ENCODE measurements at regions of chr3 and their contacts with region 1.

Region 1: GRCh38 chr3:50436114-50436674 is 67.2 kb downstream of the CACNA2D2 start:
- DNase-seq: peak; percentile 62 to 89 (median 80)
- ATAC-seq: peak; percentile 98
- H3K4me3 ChIP-seq: no peak overlapping the region
- H3K4me3 Mint-ChIP-seq: no peak overlapping the region
- H3K27ac ChIP-seq: no peak overlapping the region
- H3K27ac Mint-ChIP-seq: no peak overlapping the region
- H3K4me1 ChIP-seq: peaks cover 7% of the 10 kb centered on the region
- H3K4me1 Mint-ChIP-seq: peaks cover 4% of the 10 kb centered on the region
- H3K27me3 ChIP-seq: no peaks in the 10 kb centered on the region
- H3K27me3 Mint-ChIP-seq: no peaks in the 10 kb centered on the region
- CTCF ChIP-seq: peak; percentile 87

Region 2: GRCh38 chr3:50450209-50450921 is 14.2 kb after region 1 on chr3:
- CTCF ChIA-PET with region 1: interaction called, 13 read pairs
- POLR2A ChIA-PET with region 1: no interaction called
- intact Hi-C with region 1: no loop called
- DNase-seq: peak; percentile 48 to 82 (median 75)
- ATAC-seq: peak; percentile 80
- H3K4me3 ChIP-seq: peak overlapping the region; percentile 43 to 54
- H3K4me3 Mint-ChIP-seq: peak overlapping the region; percentile 86
- H3K27ac ChIP-seq: peak overlapping the region; percentile 83 to 88
- H3K27ac Mint-ChIP-seq: peak overlapping the region; percentile 93
- H3K4me1 ChIP-seq: peaks cover 28% of the 10 kb centered on the region
- H3K4me1 Mint-ChIP-seq: peaks cover 32% of the 10 kb centered on the region
- H3K27me3 ChIP-seq: no peaks in the 10 kb centered on the region
- H3K27me3 Mint-ChIP-seq: no peaks in the 10 kb centered on the region
- CTCF ChIP-seq: no peak

Region 3: DNA sequence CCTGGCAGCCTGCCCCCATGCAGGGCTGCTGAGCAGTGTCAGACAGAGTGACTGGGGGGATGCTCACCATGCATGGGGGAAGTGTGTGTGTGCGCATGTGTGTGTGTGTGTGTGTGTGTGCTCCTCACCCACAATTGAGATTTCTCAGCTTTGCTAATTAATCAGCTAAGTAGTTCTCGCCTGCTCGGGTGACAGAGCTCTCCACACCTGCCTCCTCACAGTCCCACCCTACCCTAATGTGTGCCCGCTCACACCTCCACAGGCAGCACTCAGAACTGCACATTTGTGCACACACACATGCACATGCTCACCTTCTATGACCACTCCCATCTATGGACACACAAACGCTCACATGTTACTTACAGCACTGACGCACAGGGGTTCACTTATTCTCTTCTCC is 30.0 kb after region 1 on chr3:
- CTCF ChIA-PET with region 1: interaction called, 3 read pairs
- POLR2A ChIA-PET with region 1: no interaction called
- intact Hi-C with region 1: loop called in 1 of 2 experiments (anchors 2 kb)
- DNase-seq: peak in 2 of 9 experiments; percentile 52 to 60
- ATAC-seq: peak; percentile 74
- H3K4me3 ChIP-seq: no peak overlapping the region
- H3K4me3 Mint-ChIP-seq: no peak overlapping the region
- H3K27ac ChIP-seq: no peak overlapping the region
- H3K27ac Mint-ChIP-seq: no peak overlapping the region
- H3K4me1 ChIP-seq: no peaks in the 10 kb centered on the region
- H3K4me1 Mint-ChIP-seq: peaks cover 3% of the 10 kb centered on the region
- H3K27me3 ChIP-seq: no peaks in the 10 kb centered on the region
- H3K27me3 Mint-ChIP-seq: no peaks in the 10 kb centered on the region
- CTCF ChIP-seq: no peak

Region 4: DNA sequence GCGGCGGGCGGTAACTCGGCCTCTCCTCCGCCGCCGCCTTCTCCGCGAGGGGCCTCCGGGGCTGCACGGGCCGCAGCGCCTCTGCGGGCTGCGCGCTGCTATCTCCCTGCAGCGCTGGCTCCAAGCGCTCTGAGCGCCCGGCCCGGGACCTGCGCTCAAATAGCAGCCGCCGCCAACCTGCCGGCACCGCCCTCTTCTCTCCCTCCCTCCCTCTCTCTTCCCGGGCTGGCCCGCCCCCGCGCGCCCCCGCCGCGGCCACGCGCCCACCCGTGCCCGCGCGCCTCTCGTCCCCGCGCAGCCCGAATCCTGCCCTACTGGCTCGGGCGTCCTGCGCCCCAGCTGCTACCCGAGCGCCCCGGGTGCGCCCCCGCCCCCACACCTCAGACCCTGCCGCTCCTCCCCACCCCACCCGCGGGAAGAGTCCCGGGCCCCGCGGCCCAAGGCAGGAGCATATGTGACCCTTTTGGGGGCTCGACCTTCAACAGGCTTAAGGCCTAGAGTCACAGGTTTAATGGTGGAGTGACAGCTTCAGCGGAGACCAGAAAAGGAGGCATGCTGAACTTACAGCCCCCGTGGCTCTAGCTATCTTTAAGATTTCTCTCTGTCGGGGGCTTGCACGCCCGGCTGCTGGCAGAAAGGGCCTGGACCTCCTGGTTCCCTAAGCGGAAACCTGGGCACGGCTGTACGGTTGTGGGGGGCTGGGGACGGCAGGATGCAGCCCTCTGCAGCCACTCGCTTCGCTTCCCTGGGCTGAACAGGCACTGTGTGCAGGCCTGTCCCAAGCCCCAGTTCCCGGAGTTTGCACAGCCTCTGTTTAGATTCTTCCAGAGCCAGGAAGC is 67.5 kb after region 1 on chr3 and contains the start of gene CACNA2D2:
- CTCF ChIA-PET with region 1: interaction called, 12 read pairs
- POLR2A ChIA-PET with region 1: no interaction called
- intact Hi-C with region 1: loop called (anchors 1 kb)
- DNase-seq: peak; percentile 45 to 88 (median 74)
- ATAC-seq: peak; percentile 93
- H3K4me3 ChIP-seq: peak within 1 kb of the TSS; percentile 49 to 52
- H3K4me3 Mint-ChIP-seq: peak within 1 kb of the TSS; percentile 79
- H3K27ac ChIP-seq: peak within 1 kb of the TSS in 1 of 2 experiments; percentile 7
- H3K27ac Mint-ChIP-seq: peak within 1 kb of the TSS; percentile 13
- H3K4me1 ChIP-seq: peaks cover 17% of the 10 kb centered on the region
- H3K4me1 Mint-ChIP-seq: peaks cover 10% of the 10 kb centered on the region
- H3K27me3 ChIP-seq: no peaks in the 10 kb centered on the region
- H3K27me3 Mint-ChIP-seq: peaks cover 5% of the 10 kb centered on the region
- CTCF ChIP-seq: no peak
- total RNA-seq, gene CACNA2D2: 7.2 to 8.7 TPM

Region 5: DNA sequence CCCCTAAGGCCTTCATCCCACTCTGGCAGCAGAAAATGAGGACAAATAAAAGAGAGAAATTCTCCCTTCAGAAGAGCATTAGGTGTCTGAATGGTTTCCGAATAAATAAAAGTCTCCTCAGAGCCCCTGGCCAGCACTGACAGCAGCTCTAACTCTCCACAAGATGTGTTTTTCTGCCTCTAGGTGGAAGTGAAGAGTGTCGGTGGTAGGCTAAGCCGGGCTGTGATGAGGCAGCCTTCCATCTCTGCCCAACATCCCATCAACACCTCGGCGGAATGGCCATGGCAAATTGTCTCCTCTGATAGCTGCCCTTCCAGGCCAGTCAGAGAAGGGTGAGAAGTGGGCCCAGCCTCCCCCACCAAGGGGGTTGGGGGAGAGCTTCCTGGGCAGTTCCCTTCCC is 73.5 kb after region 1 on chr3:
- CTCF ChIA-PET with region 1: interaction called, 12 read pairs
- POLR2A ChIA-PET with region 1: no interaction called
- intact Hi-C with region 1: no loop called
- DNase-seq: no peak
- ATAC-seq: no peak
- H3K4me3 ChIP-seq: no peak overlapping the region
- H3K4me3 Mint-ChIP-seq: no peak overlapping the region
- H3K27ac ChIP-seq: no peak overlapping the region
- H3K27ac Mint-ChIP-seq: no peak overlapping the region
- H3K4me1 ChIP-seq: no peaks in the 10 kb centered on the region
- H3K4me1 Mint-ChIP-seq: no peaks in the 10 kb centered on the region
- H3K27me3 ChIP-seq: no peaks in the 10 kb centered on the region
- H3K27me3 Mint-ChIP-seq: no peaks in the 10 kb centered on the region
- CTCF ChIP-seq: no peak

Region 6: DNA sequence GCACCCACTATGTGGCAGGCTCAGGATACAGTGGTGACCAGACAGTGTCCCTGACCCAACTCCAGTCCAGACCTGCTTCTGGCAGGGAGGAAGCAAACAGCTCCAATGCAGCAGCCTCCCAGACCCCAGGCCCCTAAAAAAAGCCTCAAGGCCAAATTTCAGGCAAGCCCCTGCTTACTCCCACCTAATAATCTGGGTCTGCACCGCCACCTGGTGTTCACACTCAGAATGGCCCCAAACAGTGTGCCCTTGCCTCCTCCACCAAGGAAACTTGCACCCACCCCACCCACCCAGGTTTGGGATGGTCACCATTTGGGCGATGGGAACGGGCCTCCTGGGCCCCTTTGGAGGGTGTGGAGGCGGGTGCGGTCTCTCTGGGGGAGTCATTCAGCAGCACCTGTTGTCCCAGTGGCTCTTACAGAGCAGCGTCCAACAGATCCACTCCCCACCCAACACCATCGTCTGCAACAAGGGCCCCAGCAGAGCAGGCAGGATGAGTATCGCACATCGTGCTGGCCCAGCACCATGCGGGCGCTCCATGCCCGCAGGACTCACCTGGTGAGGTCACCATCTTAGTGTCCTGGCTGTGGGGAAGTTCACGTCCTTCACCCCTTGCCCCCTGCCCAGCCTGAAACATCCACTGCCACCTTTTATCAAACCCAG is 114.0 kb after region 1 on chr3:
- CTCF ChIA-PET with region 1: interaction called, 125 read pairs
- POLR2A ChIA-PET with region 1: no interaction called
- intact Hi-C with region 1: loop called in 1 of 2 experiments (anchors 1 kb)
- DNase-seq: peak; percentile 43 to 75 (median 71)
- ATAC-seq: peak; percentile 89
- H3K4me3 ChIP-seq: no peak overlapping the region
- H3K4me3 Mint-ChIP-seq: no peak overlapping the region
- H3K27ac ChIP-seq: no peak overlapping the region
- H3K27ac Mint-ChIP-seq: no peak overlapping the region
- H3K4me1 ChIP-seq: no peaks in the 10 kb centered on the region
- H3K4me1 Mint-ChIP-seq: no peaks in the 10 kb centered on the region
- H3K27me3 ChIP-seq: no peaks in the 10 kb centered on the region
- H3K27me3 Mint-ChIP-seq: no peaks in the 10 kb centered on the region
- CTCF ChIP-seq: peak; percentile 82

Region 7: DNA sequence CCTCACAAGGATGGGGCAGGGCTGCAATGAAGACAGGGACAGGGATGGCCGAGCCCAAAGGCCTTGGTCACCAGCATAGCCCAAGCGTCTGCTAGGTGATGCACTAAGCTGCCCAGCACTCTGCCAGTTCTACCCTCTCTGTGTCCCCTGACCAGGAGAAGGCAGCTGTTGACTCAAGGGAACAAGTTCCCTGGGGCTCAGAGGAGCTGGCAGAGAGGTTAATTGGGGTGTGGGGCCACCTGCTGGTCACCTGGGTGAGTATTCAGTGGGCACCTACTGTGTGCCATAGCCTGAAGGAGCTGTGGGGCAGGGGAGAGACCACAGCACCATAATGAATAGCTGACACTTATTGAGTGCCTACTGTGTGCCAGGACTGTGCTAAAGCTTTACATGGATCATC is 216.5 kb after region 1 on chr3:
- CTCF ChIA-PET with region 1: no interaction called
- POLR2A ChIA-PET with region 1: no interaction called
- intact Hi-C with region 1: loop called in 1 of 2 experiments (anchors 2 kb)
- DNase-seq: peak in 8 of 9 experiments; percentile 29 to 72 (median 54)
- ATAC-seq: peak; percentile 61
- H3K4me3 ChIP-seq: no peak overlapping the region
- H3K4me3 Mint-ChIP-seq: no peak overlapping the region
- H3K27ac ChIP-seq: no peak overlapping the region
- H3K27ac Mint-ChIP-seq: peak overlapping the region; percentile 52
- H3K4me1 ChIP-seq: no peaks in the 10 kb centered on the region
- H3K4me1 Mint-ChIP-seq: peaks cover 1% of the 10 kb centered on the region
- H3K27me3 ChIP-seq: no peaks in the 10 kb centered on the region
- H3K27me3 Mint-ChIP-seq: no peaks in the 10 kb centered on the region
- CTCF ChIP-seq: peak; percentile 42

Measured in CD8-positive, alpha-beta T cell (primary cell).